CD8-positive, alpha-beta memory T cell (primary cell): ENCODE measurements at regions of chr3 and their contacts with region 1.

Region 1: DNA sequence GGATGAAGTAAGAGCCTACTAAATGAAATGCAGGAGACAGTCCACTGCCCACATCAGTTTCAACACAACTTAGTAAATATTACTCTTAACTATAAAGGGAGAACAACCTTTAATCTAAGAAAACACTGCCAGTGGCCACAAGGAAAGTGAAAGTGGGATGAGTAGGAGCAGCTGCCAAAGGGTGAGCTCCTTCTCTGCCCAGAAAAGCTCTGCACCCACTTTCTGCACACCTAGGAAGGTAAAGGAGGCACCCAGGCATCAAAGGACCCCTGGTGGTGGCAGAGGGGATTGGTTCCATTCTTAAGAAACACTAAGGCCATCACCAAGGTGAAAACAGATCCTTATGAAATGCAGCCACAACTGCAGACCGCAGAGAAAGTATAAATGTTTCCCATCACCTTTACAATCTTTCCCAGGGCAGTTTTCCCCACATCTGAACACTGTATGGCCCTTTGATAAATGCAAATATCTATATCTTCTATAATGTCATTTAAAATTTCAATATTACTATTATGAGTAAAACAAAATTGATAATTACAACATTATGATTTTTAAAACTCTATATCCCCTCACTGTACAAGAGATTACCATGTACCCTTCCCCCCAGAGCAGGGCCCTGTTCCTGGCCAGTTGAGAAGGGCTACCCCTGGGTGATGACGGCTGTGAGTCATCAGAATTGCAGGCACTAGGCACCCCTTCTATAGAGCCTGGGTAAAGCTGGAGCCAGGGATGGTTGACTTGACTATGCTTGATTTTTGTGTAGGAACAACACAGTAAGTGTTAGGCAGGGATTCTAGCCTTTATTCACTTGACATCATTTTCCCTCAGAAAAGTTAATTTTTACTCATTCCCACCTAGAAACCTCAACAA is 92.0 kb downstream of the SNRK start:
- DNase-seq: peak; percentile 47 to 82 (median 62)
- H3K4me3 ChIP-seq: no peak overlapping the region
- H3K4me3 Mint-ChIP-seq: peak overlapping the region in 3 of 7 donors; percentile 2 to 45 (median 20)
- H3K27ac ChIP-seq: no peak overlapping the region
- H3K27ac Mint-ChIP-seq: peak overlapping the region; percentile 3 to 85 (median 62)
- H3K4me1 ChIP-seq: peaks cover 8% of the 10 kb centered on the region
- H3K4me1 Mint-ChIP-seq: peaks cover 18 to 33% (median 25%) of the 10 kb centered on the region in 3 donors
- H3K27me3 ChIP-seq: no peaks in the 10 kb centered on the region
- H3K27me3 Mint-ChIP-seq: peaks cover 0 to 1% of the 10 kb centered on the region in 2 donors

Region 2: GRCh38 chr3:43105596-43106292 is 272.6 kb before region 1 on chr3 and contains the start of gene POMGNT2:
- CTCF ChIA-PET with region 1: no interaction called
- POLR2A ChIA-PET with region 1: no interaction called
- DNase-seq: peak; percentile 80 to 90 (median 84)
- H3K4me3 ChIP-seq: peak within 1 kb of the TSS; percentile 43
- H3K4me3 Mint-ChIP-seq: peak within 1 kb of the TSS; percentile 77 to 91 (median 86)
- H3K27ac ChIP-seq: peak within 1 kb of the TSS; percentile 26
- H3K27ac Mint-ChIP-seq: peak within 1 kb of the TSS; percentile 17 to 68 (median 52)
- H3K4me1 ChIP-seq: peaks cover 17% of the 10 kb centered on the region
- H3K4me1 Mint-ChIP-seq: peaks cover 16 to 23% (median 20%) of the 10 kb centered on the region in 3 donors
- H3K27me3 ChIP-seq: no peaks in the 10 kb centered on the region
- H3K27me3 Mint-ChIP-seq: peaks cover 0 to 1% of the 10 kb centered on the region in 2 donors
- total RNA-seq, gene POMGNT2: 9.7 to 11.0 TPM

Region 3: GRCh38 chr3:43223670-43224364 is 154.5 kb before region 1 on chr3:
- CTCF ChIA-PET with region 1: interaction called, 10 read pairs
- POLR2A ChIA-PET with region 1: no interaction called
- DNase-seq: peak in 1 of 5 donors; percentile 10
- H3K4me3 ChIP-seq: no peak overlapping the region
- H3K4me3 Mint-ChIP-seq: no peak overlapping the region
- H3K27ac ChIP-seq: no peak overlapping the region
- H3K27ac Mint-ChIP-seq: peak overlapping the region in 6 of 8 donors; percentile 15 to 81 (median 51)
- H3K4me1 ChIP-seq: peaks cover 48% of the 10 kb centered on the region
- H3K4me1 Mint-ChIP-seq: peaks cover 46 to 52% (median 50%) of the 10 kb centered on the region in 3 donors
- H3K27me3 ChIP-seq: no peaks in the 10 kb centered on the region
- H3K27me3 Mint-ChIP-seq: no peaks in the 10 kb centered on the region

Region 4: GRCh38 chr3:43389388-43390254 is 11.3 kb after region 1 on chr3:
- CTCF ChIA-PET with region 1: interaction called, 22 read pairs
- POLR2A ChIA-PET with region 1: interaction called, 3 read pairs
- DNase-seq: peak; percentile 43 to 89 (median 83)
- H3K4me3 ChIP-seq: peak overlapping the region; percentile 36
- H3K4me3 Mint-ChIP-seq: peak overlapping the region; percentile 0 to 88 (median 68)
- H3K27ac ChIP-seq: peak overlapping the region; percentile 62
- H3K27ac Mint-ChIP-seq: peak overlapping the region; percentile 90 to 99 (median 96)
- H3K4me1 ChIP-seq: peaks cover 47% of the 10 kb centered on the region
- H3K4me1 Mint-ChIP-seq: peaks cover 83 to 98% (median 95%) of the 10 kb centered on the region in 3 donors
- H3K27me3 ChIP-seq: no peaks in the 10 kb centered on the region
- H3K27me3 Mint-ChIP-seq: no peaks in the 10 kb centered on the region